Heart right ventricle (tissue), 16 donors: ENCODE measurements at regions of chr7 and their contacts with region 1.

Region 1: GRCh38 chr7:37541810-37542443 is 93.3 kb upstream of the ELMO1 start:
- DNase-seq: no peak
- ATAC-seq: no peak
- H3K4me3 ChIP-seq: no peak overlapping the region
- H3K27ac ChIP-seq: no peak overlapping the region
- H3K4me1 ChIP-seq: peaks cover 0 to 7% (median 0%) of the 10 kb centered on the region in 9 donors
- H3K27me3 ChIP-seq: no peaks in the 10 kb centered on the region
- CTCF ChIP-seq: no peak

Region 2: DNA sequence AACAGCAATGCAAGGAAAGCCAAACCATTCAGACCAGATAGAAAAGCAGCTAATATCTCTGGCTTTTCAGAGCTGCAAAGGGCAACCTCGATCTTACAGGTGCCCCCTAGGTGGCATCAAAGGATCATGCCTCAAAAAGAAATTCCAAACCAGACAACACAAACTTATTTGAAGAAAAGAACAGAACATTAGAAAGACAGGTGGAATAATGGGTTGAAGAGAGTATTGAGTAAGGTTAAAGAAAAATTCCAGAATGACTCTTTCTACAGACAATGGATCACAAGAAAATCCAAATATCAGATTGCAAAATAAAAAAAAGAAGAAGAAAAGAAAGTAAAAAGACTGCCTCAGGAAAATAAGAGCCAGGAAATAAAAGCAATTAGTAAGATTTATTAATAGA is 307.0 kb before region 1 on chr7:
- intact Hi-C with region 1: no loop called
- DNase-seq: no peak
- ATAC-seq: peak in 1 of 8 donors; percentile 33
- H3K4me3 ChIP-seq: no peak overlapping the region
- H3K27ac ChIP-seq: no peak overlapping the region
- H3K4me1 ChIP-seq: peaks cover 0 to 20% (median 3%) of the 10 kb centered on the region in 9 donors
- H3K27me3 ChIP-seq: no peaks in the 10 kb centered on the region
- CTCF ChIP-seq: peak in 8 of 9 donors; percentile 21 to 71 (median 60)

Region 3: DNA sequence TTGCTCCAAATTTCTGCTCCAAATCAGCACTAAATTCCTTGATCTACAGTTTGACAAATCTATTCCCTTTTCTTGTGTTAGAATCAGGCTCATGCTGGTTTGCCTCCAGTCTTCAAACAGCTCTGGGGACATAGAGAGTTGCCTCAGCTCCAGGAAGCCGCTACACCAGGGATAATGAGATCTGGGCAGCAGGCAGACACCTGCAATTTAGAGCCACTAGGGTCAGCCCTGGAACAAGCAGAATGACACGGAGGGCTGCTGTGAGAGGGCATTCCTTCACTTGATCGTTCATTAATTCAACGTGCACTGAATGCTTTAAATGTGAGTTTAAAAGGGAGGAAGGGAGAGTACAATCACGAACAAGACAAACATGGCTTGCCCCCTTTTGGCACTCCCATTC is 89.6 kb before region 1 on chr7:
- intact Hi-C with region 1: no loop called
- DNase-seq: no peak
- ATAC-seq: no peak
- H3K4me3 ChIP-seq: no peak overlapping the region
- H3K27ac ChIP-seq: no peak overlapping the region
- H3K4me1 ChIP-seq: peaks cover 0 to 14% (median 10%) of the 10 kb centered on the region in 9 donors
- H3K27me3 ChIP-seq: peaks cover 0 to 14% (median 0%) of the 10 kb centered on the region in 7 donors
- CTCF ChIP-seq: no peak

Region 4: GRCh38 chr7:37732253-37732652 is 190.3 kb after region 1 on chr7:
- intact Hi-C with region 1: loop called in 1 of 10 experiments (anchors 10 kb)
- DNase-seq: peak; percentile 18 to 32
- ATAC-seq: peak; percentile 23 to 86 (median 70)
- H3K4me3 ChIP-seq: no peak overlapping the region
- H3K27ac ChIP-seq: peak overlapping the region in 1 of 10 donors; percentile 4
- H3K4me1 ChIP-seq: peaks cover 0 to 33% (median 13%) of the 10 kb centered on the region in 9 donors
- H3K27me3 ChIP-seq: no peaks in the 10 kb centered on the region
- CTCF ChIP-seq: peak in 8 of 9 donors; percentile 17 to 66 (median 50)

Region 5: DNA sequence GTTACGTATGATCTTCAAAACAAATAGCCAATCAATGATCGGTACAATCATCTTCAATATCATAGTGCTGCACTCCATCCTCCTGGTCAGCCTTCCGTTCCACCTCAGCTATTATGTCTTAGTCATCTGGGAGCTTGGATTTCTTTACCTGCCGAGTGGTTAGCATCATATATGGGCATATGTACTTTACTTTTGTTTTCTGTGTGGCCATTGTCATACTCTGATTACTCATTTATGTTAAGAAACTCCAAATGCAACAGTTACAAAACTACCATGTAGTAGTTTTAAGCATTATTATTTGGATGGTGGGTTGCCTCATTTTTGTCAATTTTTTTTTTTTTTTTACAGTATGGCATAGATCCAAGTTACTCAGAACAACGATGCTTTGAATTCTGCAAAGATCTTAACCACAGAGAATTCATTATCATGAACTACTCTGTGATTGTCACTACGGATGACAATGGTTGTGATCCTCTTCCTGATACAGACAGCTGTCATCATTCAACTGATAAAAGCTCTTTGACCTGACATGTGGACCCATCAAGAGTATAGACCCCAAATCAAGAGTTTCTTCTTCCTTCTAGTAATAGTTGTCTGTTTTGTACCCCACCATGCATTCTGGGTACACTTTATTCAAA is 254.3 kb after region 1 on chr7:
- intact Hi-C with region 1: no loop called
- DNase-seq: no peak
- ATAC-seq: no peak
- H3K4me3 ChIP-seq: no peak overlapping the region
- H3K27ac ChIP-seq: no peak overlapping the region
- H3K4me1 ChIP-seq: no peaks in the 10 kb centered on the region
- H3K27me3 ChIP-seq: no peaks in the 10 kb centered on the region
- CTCF ChIP-seq: no peak